Psoas muscle (tissue), 8 donors: ENCODE measurements at regions of chr4 and their contacts with region 1.

Region 1: DNA sequence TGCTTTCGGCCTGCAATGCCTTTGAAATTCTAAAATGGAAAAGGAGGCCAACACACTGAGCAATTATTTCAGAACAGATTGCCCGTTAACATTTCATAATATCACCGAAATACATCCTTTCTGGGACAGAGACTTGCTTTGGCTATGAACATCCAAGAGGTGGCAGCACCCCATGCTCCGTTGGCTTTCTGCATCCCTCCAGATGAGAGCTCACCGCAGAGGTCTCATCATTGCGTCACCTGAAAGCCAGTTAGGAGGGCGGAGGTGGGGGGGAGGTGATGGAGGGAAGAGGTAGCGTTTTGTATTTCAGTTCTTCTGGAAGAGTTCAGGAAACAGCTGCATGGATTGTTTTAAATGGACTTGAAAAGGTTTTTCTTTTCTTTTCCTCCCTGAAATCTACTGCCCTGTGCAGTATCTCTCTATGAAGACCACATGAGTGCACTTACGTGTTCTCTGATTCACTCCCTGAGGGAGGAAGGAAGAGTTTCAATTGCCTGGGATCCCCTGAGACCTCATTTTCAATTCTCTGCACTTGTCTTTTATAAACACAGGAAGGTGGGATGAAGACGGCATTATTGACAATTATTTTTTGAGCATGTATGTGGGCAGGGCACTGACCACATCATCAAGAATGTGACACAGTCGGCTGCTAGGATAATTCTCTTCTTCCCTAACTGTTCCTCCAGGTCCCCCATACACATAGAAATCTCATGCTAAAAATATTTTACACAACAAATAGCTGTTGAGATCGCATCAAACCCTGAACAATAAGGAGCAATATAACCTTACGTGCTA is 166.9 kb upstream of the PGRMC2 start:
- DNase-seq: peak; percentile 84 to 87
- ATAC-seq: peak; percentile 82 to 92 (median 88)
- H3K4me3 ChIP-seq: no peak overlapping the region
- H3K27ac ChIP-seq: peak overlapping the region; percentile 13
- H3K4me1 ChIP-seq: peaks cover 39% of the 10 kb centered on the region
- H3K27me3 ChIP-seq: no peaks in the 10 kb centered on the region
- CTCF ChIP-seq: peak; percentile 81

Region 2: DNA sequence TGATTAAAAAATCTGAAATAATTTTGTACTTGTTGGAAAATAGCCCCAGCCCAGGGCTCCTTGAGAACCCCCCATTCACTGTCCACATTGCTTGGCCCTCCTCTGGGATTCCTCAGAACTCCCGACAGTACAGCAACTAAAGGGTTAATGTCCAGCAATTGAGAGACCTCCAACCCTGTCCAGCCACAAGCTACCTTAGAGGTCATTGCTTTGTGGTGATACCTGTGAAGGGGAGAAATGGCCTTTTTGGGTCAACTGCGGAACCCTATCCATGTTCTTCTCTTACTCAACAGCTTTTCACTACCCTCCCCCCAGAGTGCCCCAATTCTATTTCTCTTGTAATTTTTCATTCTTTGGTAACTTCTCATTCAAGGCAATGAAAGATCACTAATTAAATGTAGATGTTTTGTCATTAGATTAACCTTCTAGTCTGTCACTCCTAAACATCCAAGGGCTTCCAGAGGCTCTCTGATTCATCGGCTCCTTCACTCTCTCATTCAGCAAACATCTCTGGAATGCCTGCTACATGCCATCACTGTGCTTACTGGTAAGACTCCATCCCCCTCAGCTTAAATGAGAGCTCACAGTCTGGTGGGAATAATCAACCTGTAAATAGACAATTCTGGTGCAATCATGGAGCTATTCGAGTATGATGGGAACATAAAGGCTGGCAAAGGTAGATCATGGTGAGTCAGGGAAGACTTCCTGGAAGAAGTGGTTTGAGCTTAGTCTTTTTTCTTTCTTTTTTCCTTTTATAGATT is 74.5 kb after region 1 on chr4:
- intact Hi-C with region 1: loop called in 1 of 2 experiments (anchors 5 kb)
- DNase-seq: no peak
- ATAC-seq: peak; percentile 99 to 100 (median 100)
- H3K4me3 ChIP-seq: no peak overlapping the region
- H3K27ac ChIP-seq: peak overlapping the region; percentile 75
- H3K4me1 ChIP-seq: peaks cover 13% of the 10 kb centered on the region
- H3K27me3 ChIP-seq: no peaks in the 10 kb centered on the region
- CTCF ChIP-seq: no peak

Region 3: DNA sequence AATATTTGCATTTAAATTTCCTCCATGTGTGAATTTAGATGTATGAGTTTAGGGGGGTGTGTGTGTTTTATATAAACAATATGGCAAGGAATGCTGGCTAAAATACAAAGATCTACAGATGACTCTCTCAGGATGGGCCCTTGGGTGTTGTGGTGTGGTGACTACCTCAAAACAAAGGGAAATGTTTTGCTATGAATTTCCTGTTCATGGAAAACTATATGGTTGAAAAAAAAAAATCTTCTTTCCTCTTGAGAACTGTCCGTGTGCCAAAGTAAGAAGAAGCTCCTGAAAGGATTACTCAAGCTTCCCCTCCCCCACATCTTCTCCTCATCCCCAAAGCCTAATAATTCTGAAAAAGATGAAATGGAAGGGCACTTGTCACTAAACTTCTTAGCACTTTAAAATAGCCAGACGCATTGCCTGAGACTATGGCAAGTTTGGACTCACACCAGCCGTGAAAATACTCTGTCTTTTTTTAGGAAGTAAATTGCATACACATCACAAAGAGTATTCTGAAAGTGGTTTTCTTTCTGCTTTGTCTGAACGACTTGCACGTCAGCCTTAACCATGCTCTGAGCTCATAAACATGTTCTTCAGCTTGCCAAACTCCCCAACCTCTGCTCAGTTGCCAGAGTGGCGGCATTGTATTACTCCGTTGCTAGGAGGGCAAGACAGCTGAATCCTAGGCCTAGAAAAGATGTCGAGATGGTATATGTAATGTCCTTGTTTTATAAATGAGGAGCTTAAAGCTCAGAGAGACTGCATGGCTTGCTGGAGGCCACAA is 104.6 kb after region 1 on chr4:
- intact Hi-C with region 1: loop called (anchors 5 to 10 kb)
- DNase-seq: no peak
- ATAC-seq: peak; percentile 69 to 81 (median 80)
- H3K4me3 ChIP-seq: no peak overlapping the region
- H3K27ac ChIP-seq: peak overlapping the region; percentile 56
- H3K4me1 ChIP-seq: peaks cover 14% of the 10 kb centered on the region
- H3K27me3 ChIP-seq: no peaks in the 10 kb centered on the region
- CTCF ChIP-seq: no peak

Region 4: GRCh38 chr4:128809477-128810330 is 355.2 kb after region 1 on chr4 and contains the start of gene JADE1:
- intact Hi-C with region 1: loop called in 1 of 2 experiments (anchors 5 kb)
- DNase-seq: peak; percentile 88 to 93
- ATAC-seq: peak; percentile 57 to 70 (median 66)
- H3K4me3 ChIP-seq: peak within 1 kb of the TSS; percentile 85
- H3K27ac ChIP-seq: peak within 1 kb of the TSS; percentile 97
- H3K4me1 ChIP-seq: peaks cover 8% of the 10 kb centered on the region
- H3K27me3 ChIP-seq: no peaks in the 10 kb centered on the region
- CTCF ChIP-seq: no peak
- total RNA-seq, gene JADE1: 16.8 to 21.4 (median 19.0) TPM

Region 5: GRCh38 chr4:130306566-130306965 is 1852.1 kb after region 1 on chr4:
- intact Hi-C with region 1: no loop called
- DNase-seq: no peak
- ATAC-seq: no peak
- H3K4me3 ChIP-seq: no peak overlapping the region
- H3K27ac ChIP-seq: no peak overlapping the region
- H3K4me1 ChIP-seq: no peaks in the 10 kb centered on the region
- H3K27me3 ChIP-seq: no peaks in the 10 kb centered on the region
- CTCF ChIP-seq: no peak